Activated B cell treated with CpG ODN at 0.5 μM for 24 hours (primary cell): ENCODE measurements at regions of chr12 and their contacts with region 1.

Region 1: DNA sequence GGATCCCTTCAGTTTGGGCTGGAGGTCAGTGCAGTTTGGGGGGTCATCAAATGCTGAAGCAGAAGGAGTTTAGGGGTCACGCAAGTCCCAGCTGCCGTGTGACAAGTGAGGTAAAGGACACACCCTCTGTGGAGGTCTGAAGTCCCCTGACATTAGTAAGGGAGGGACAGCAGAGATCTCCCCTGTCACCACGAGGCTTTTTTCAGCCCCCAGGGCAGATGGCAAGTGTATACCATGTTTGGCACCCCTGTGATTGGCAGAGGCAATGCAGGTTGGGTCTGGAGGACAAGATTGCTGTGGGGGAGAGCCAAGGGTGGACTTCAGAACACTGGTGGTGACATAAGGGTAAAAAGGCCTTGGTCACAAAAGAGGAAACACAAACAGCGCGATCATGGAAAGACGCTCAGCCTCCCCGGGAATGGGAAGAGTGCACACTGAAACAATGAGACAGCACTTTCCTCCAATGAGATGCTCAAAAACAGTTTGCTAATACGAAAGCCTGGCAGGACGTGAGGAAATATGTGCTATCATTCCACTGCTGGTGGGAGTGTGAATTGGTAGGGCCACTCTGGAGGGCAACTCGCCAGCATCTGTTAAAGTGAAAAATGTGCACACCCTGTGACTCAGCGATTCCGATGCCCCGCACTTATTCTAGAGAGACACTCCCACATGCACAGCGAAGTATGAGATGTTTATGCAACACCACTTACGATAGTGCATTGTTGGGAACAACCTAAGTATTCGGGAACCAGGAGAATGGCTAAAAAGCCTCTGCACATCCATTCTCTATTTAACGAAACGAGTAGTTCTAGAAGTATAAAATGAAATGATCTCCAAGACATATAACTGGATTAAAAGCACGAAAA is 14.4 kb upstream of the CD27 start:
- DNase-seq: no peak
- ATAC-seq: no peak
- H3K4me3 Mint-ChIP-seq: peak overlapping the region; percentile 58
- H3K27ac Mint-ChIP-seq: peak overlapping the region; percentile 65
- H3K4me1 Mint-ChIP-seq: peaks cover 72% of the 10 kb centered on the region
- H3K27me3 Mint-ChIP-seq: no peaks in the 10 kb centered on the region
- CTCF ChIP-seq: no peak

Region 2: GRCh38 chr12:6330192-6330591 is 100.2 kb before region 1 on chr12:
- CTCF ChIA-PET with region 1: no interaction called
- POLR2A ChIA-PET with region 1: interaction called, 4 read pairs
- intact Hi-C with region 1: loop called (anchors 2 kb)
- DNase-seq: peak; percentile 50
- ATAC-seq: peak; percentile 100
- H3K4me3 Mint-ChIP-seq: no peak overlapping the region
- H3K27ac Mint-ChIP-seq: peak overlapping the region; percentile 12
- H3K4me1 Mint-ChIP-seq: peaks cover 15% of the 10 kb centered on the region
- H3K27me3 Mint-ChIP-seq: peaks cover 57% of the 10 kb centered on the region
- CTCF ChIP-seq: no peak

Region 3: DNA sequence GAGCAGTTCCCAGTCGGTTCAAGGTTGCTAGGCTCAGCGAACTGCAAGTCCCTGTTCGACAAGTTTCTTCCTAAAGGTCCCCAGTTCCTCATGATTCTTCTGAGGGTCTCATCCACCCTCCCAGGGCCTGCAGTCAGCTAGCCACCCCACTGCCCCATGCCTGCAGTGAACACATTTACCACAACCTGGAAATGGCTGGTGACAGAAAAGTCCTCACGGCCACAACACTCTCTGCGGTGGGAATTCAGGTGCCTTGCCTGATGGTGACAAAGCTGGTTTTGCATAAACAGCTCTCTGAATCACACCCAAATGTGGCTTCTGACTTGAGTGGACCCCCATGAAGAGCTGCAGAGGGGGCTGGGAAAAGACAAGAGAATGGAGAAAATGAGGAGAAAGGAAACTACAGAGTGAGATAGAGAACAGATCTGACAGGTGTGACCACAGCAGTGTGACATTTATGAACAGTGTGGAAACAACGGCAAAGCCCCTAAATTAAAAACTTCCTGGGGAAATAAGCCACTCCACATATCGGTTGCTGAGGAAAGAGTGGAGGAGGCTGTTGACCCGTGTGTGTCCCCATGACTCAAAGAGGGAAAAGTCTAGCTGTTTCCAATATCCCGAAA is 13.1 kb after region 1 on chr12:
- CTCF ChIA-PET with region 1: interaction called, 13 read pairs
- POLR2A ChIA-PET with region 1: interaction called, 109 read pairs
- intact Hi-C with region 1: loop called (anchors 1 kb)
- DNase-seq: no peak
- ATAC-seq: peak; percentile 49
- H3K4me3 Mint-ChIP-seq: peak overlapping the region; percentile 84
- H3K27ac Mint-ChIP-seq: peak overlapping the region; percentile 92
- H3K4me1 Mint-ChIP-seq: peaks cover 69% of the 10 kb centered on the region
- H3K27me3 Mint-ChIP-seq: no peaks in the 10 kb centered on the region
- CTCF ChIP-seq: no peak

Region 4: DNA sequence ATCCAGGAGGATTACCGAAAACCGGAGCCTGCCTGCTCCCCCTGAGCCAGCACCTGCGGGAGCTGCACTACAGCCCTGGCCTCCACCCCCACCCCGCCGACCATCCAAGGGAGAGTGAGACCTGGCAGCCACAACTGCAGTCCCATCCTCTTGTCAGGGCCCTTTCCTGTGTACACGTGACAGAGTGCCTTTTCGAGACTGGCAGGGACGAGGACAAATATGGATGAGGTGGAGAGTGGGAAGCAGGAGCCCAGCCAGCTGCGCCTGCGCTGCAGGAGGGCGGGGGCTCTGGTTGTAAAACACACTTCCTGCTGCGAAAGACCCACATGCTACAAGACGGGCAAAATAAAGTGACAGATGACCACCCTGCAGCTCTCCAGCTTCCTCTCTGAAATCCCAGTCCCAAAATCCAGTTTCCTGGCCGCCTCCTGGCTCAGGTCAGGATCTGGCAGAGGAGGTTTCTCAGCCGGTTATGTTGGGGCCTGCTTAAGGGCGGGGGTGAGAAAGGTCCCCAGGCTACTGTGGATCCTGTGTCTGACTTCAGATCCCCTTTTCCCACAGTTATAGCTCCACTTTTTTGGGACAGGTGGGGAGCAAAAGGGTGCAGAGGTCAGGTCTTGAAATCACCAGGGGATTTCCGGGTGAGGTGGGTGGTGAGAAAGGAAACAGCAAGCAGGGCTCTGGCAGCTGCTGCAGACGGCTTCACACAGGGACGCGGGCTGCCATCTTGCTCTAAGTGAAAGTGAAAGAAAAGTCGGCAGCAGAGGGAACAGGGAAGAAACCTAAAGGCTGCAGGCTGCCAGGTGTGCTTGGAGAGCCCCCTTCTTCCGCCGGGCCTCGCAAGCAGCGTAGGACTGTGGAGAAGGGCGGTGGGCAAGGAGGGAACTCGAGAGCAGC is 21.2 kb after region 1 on chr12 and contains the start of gene TAPBPL:
- CTCF ChIA-PET with region 1: interaction called, 3 read pairs
- POLR2A ChIA-PET with region 1: interaction called, 109 read pairs
- intact Hi-C with region 1: loop called (anchors 1 kb)
- DNase-seq: peak; percentile 62
- ATAC-seq: peak; percentile 86
- H3K4me3 Mint-ChIP-seq: peak within 1 kb of the TSS; percentile 97
- H3K27ac Mint-ChIP-seq: peak within 1 kb of the TSS; percentile 99
- H3K4me1 Mint-ChIP-seq: peaks cover 58% of the 10 kb centered on the region
- H3K27me3 Mint-ChIP-seq: no peaks in the 10 kb centered on the region
- CTCF ChIP-seq: no peak
- total RNA-seq, gene TAPBPL: 52.5 and 64.0 TPM in 2 replicates

Region 5: DNA sequence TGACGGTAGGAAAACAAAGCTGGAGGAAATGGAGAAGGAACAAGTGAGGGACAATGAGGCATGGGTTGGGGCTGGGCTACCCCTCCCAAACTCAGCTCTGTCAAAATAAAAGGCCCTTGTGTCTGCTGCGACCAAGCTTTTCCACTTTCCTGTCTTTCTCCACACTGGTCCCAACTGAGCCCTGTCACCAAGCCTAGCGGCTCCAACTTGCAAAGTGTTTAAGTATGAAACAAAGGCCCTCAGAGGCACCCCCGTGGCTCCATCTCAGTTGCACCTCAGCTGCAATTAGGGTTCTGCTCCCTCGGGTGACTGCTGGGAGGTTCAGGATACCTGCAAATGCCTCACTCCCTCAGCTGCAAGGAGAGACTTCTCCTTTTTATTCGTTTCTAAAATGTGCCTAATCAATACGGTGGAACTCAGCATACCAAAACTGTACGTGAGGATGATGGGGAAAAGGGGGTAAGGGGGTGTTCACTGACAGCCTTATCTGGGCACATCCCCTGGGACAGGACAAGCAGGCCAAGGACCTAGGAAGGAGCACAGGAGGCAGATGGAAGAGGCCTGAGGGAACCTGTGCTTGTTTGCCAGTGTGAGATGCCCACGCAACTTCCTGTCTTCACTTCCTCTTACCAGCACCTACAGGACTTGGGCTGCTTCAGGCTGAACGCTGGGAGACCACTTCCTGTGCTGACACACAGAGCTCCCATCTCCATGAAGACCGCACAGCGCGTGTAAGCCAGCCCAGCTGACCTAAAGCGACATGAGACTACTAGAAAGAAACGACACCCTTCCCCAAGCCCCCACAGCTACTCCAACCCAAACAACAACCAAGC is 31.3 kb after region 1 on chr12:
- CTCF ChIA-PET with region 1: interaction called, 276 read pairs
- POLR2A ChIA-PET with region 1: interaction called, 200 read pairs
- intact Hi-C with region 1: loop called (anchors 1 kb)
- DNase-seq: peak; percentile 70
- ATAC-seq: peak; percentile 91
- H3K4me3 Mint-ChIP-seq: peak overlapping the region; percentile 70
- H3K27ac Mint-ChIP-seq: peak overlapping the region; percentile 99
- H3K4me1 Mint-ChIP-seq: peaks cover 89% of the 10 kb centered on the region
- H3K27me3 Mint-ChIP-seq: no peaks in the 10 kb centered on the region
- CTCF ChIP-seq: no peak